Activated CD4-positive, alpha-beta T cell treated with anti-CD3 and anti-CD28 coated beads for 36 hours (primary cell): ENCODE measurements at regions of chr22 and their contacts with region 1.

Region 1: DNA sequence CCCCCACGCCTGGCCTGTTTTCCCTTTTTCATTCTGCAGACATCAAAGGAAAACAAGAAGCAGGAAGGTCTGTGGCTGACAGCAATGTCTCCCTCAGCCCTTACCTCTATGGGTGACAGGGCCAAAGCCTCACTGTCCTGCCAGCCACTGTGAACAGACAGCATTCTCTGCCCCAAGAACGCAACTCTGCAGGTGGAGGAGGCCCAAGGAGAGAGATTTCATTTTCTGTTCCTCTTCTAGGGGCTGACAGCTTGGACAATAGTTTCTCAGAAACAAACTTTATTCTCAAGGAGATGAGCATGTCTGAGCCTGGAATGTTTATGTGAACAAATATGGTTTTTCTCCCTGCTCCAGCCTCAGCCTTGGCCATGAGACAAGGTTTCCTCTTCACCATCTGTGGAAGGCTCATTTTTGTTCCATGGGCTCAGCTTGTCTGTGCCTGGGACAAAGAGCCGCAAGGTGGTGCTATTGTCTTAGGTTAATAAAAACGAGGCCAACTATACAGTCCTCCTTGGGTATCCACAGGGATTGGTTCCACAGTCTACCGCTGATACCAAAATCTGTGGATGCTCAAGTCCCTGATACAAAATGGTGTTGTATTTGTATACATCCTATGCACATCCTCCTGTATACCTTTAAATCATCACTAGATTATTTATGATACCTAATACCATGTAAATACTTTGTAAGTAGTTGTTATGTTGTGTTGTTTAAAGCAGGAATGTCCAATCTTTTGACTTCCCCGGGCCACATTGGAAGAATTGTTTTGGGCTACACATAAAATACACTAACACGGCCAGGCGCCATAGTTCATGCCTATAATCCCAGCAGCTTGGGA is 5.8 kb downstream of the PIWIL3 start:
- DNase-seq: peak; percentile 72
- ATAC-seq: peak; percentile 75
- H3K4me3 Mint-ChIP-seq: no peak overlapping the region
- H3K27ac Mint-ChIP-seq: no peak overlapping the region
- H3K4me1 Mint-ChIP-seq: no peaks in the 10 kb centered on the region
- H3K27me3 Mint-ChIP-seq: peaks cover 2% of the 10 kb centered on the region

Region 2: GRCh38 chr22:24230911-24231656 is 537.7 kb before region 1 on chr22:
- CTCF ChIA-PET with region 1: no interaction called
- POLR2A ChIA-PET with region 1: no interaction called
- intact Hi-C with region 1: no loop called
- DNase-seq: peak; percentile 85
- ATAC-seq: peak; percentile 91
- H3K4me3 Mint-ChIP-seq: peak overlapping the region; percentile 19
- H3K27ac Mint-ChIP-seq: peak overlapping the region; percentile 42
- H3K4me1 Mint-ChIP-seq: peaks cover 2% of the 10 kb centered on the region
- H3K27me3 Mint-ChIP-seq: no peaks in the 10 kb centered on the region

Region 3: DNA sequence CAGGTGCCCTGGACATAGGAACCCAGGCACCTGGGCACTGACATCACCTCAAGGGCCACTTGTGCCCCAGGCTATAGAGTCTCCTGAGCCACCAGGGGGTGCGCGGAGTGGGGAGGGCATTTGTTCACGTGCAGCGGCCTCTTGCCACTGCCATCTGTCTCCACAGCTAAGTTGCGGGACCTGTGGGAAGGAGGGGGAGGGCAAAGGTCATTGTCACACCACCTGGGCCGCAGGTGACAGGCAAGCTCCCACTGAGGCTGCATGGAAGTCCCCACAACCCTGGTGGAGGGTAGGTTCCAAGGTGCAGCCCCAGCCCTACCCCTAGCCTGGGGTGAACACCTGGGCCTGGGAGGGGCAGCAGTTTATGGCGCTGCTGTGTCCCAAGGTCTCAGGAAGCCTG is 73.7 kb before region 1 on chr22:
- CTCF ChIA-PET with region 1: no interaction called
- POLR2A ChIA-PET with region 1: no interaction called
- intact Hi-C with region 1: no loop called
- DNase-seq: no peak
- ATAC-seq: no peak
- H3K4me3 Mint-ChIP-seq: no peak overlapping the region
- H3K27ac Mint-ChIP-seq: no peak overlapping the region
- H3K4me1 Mint-ChIP-seq: no peaks in the 10 kb centered on the region
- H3K27me3 Mint-ChIP-seq: no peaks in the 10 kb centered on the region

Region 4: DNA sequence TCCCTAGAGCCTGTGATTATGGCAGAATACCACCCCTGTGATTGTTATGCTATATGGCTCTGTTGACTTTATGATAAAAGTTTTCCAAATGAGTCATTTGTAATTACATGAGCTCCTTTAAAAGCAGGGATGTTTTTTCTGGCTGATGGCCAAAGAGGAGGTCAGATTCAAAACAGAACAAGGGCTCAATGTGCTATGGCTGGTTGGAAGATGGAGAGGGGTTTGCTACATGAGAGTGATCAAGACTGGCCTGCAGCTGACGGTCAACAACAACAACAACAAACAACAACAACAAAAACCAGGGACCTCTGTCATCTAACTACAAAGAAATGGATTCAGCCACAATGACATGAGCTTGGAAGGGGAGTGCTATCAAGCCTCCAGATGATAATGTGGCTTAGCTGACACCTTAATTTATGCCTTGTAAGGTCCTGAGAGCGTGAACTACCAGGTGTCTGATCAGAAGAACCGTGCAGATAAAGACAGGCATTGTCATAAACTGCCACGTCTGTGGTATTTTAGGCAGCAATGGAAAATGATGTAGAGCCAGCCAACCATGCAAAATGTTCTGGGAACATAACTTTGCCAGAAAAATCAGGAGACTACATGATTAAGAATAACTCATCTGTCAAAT is 41.4 kb before region 1 on chr22:
- CTCF ChIA-PET with region 1: no interaction called
- POLR2A ChIA-PET with region 1: no interaction called
- intact Hi-C with region 1: no loop called
- DNase-seq: no peak
- ATAC-seq: no peak
- H3K4me3 Mint-ChIP-seq: no peak overlapping the region
- H3K27ac Mint-ChIP-seq: no peak overlapping the region
- H3K4me1 Mint-ChIP-seq: no peaks in the 10 kb centered on the region
- H3K27me3 Mint-ChIP-seq: peaks cover 10% of the 10 kb centered on the region

Region 5: DNA sequence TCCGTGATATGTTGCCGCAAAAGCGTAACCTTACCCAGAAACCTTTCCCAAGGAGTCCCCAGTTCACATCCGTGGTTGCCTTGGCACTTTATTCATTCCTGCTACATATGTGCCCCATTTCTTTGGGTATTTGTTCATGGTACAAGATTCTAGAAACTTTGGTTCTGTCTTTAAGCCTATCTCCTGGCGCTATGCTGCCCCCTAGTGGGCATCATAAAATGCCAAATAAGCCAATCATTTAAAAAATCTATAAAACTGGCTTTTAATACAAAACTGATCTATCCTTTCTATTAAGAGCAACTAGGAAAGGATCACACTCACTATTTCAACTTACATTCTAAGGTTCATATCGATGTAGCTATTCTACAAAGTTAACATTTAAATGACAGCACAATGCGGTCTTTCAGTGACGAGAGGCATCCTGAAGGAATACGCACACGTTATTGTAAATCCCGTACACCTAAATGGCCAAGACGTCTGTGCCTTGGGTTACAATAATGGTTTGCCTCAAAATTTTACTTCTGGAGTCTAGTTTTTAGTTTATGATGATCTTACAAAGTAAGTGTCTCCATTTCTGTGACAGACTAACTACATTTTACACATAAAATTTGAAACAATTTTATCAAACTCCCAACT is 10.5 kb before region 1 on chr22:
- CTCF ChIA-PET with region 1: interaction called, 28 read pairs
- POLR2A ChIA-PET with region 1: no interaction called
- intact Hi-C with region 1: no loop called
- DNase-seq: peak; percentile 76
- ATAC-seq: no peak
- H3K4me3 Mint-ChIP-seq: no peak overlapping the region
- H3K27ac Mint-ChIP-seq: no peak overlapping the region
- H3K4me1 Mint-ChIP-seq: no peaks in the 10 kb centered on the region
- H3K27me3 Mint-ChIP-seq: no peaks in the 10 kb centered on the region

Region 6: DNA sequence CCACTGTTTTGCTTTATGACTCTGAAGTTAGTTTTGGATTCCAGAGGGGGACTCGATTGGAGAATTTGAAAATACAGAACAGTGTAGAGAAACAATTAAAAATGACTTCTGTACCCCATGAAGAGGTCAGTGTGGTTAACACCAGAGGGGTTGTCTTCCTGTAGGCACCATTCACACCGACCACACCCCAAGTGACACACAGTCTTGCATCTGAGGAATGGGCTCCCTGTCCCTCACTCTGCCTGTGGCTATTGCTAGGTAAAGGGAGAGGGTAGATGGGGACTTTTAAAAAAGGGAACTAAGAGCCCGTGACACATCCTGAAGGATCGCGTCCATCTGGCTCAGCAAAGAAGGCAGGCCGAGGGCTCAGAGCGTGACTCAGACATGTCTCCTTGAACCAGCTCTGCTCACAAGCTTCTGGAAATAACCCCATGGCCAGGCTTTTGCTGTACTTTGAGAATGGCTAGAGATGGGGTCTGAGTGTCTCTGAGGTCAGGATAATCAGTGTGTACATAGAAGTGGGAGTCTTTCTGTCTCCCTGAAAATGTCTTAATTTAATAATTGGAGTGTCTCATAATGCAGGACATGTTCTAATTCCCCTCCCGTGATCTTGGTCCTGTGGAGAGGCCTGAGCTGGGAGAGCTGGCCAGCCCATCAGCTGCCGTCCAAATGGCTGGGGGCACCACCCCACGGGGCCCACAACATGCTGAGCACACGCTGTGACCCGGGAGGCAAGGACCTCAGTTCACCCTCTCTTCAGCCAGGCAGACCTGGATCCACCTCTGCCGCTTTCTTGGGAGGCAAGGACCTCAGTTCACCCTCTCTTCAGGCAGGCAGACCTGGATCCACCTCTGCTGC is 76.5 kb after region 1 on chr22:
- CTCF ChIA-PET with region 1: interaction called, 78 read pairs
- POLR2A ChIA-PET with region 1: no interaction called
- intact Hi-C with region 1: loop called (anchors 1 kb)
- DNase-seq: peak; percentile 7
- ATAC-seq: no peak
- H3K4me3 Mint-ChIP-seq: no peak overlapping the region
- H3K27ac Mint-ChIP-seq: no peak overlapping the region
- H3K4me1 Mint-ChIP-seq: no peaks in the 10 kb centered on the region
- H3K27me3 Mint-ChIP-seq: no peaks in the 10 kb centered on the region